ENCODE measurements at regions of chr11 and their contacts with region 1.

Region 1: GRCh38 chr11:30960387-30960992 is 374.3 kb upstream of the MPPED2 start:
- DNase-seq: peak; percentile 35
- ATAC-seq: peak; percentile 75
- H3K4me3 ChIP-seq: no peak overlapping the region
- H3K27ac ChIP-seq: no peak overlapping the region
- H3K4me1 ChIP-seq: no peaks in the 10 kb centered on the region
- H3K27me3 ChIP-seq: peaks cover 9% of the 10 kb centered on the region
- CTCF ChIP-seq: peak; percentile 54 to 66 (median 60)
- POLR2A ChIP-seq: no peak
- RAD21 ChIP-seq: peak; percentile 68

Region 2: DNA sequence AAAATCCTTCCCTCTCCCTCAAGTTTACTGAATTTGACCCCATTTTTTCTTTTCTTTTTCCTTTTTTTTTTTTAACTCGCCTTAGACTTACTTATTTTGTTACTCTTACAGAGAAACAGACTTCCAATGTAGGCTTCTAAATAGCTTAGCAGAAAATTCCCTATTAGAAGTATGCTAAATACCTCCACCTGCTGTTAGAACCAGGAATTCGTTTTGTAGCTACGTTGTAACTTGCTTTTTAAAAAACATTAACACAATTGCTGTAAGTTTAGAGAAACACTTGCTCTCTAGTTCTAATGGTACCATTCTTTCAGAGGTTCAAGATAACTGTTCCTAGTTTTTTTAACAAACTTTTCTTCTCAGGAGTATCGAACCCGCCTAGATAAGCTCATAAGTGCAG is 84.8 kb after region 1 on chr11:
- CTCF ChIA-PET with region 1: interaction called, 54 read pairs
- POLR2A ChIA-PET with region 1: no interaction called
- RAD21 ChIA-PET with region 1: interaction called, 6 to 7 read pairs
- intact Hi-C with region 1: loop called (anchors 1 kb)
- DNase-seq: peak; percentile 10
- ATAC-seq: no peak
- H3K4me3 ChIP-seq: no peak overlapping the region
- H3K27ac ChIP-seq: no peak overlapping the region
- H3K4me1 ChIP-seq: no peaks in the 10 kb centered on the region
- H3K27me3 ChIP-seq: no peaks in the 10 kb centered on the region; the same call in 1 of the 2 replicates
- CTCF ChIP-seq: peak; percentile 20 to 58 (median 32); a peak in 4 of 6 replicates
- POLR2A ChIP-seq: no peak
- RAD21 ChIP-seq: no peak

Region 3: GRCh38 chr11:31233424-31233823 is 272.9 kb after region 1 on chr11:
- CTCF ChIA-PET with region 1: interaction called, 16 read pairs
- POLR2A ChIA-PET with region 1: no interaction called
- RAD21 ChIA-PET with region 1: no interaction called
- intact Hi-C with region 1: loop called (anchors 2 kb)
- DNase-seq: peak; percentile 29
- ATAC-seq: peak; percentile 87
- H3K4me3 ChIP-seq: no peak overlapping the region
- H3K27ac ChIP-seq: no peak overlapping the region
- H3K4me1 ChIP-seq: no peaks in the 10 kb centered on the region
- H3K27me3 ChIP-seq: no peaks in the 10 kb centered on the region
- CTCF ChIP-seq: peak; percentile 40 to 60 (median 53); a peak in 5 of 6 replicates
- POLR2A ChIP-seq: no peak
- RAD21 ChIP-seq: peak; percentile 40

Region 4: GRCh38 chr11:31240338-31240904 is 279.9 kb after region 1 on chr11:
- CTCF ChIA-PET with region 1: no interaction called
- POLR2A ChIA-PET with region 1: no interaction called
- RAD21 ChIA-PET with region 1: no interaction called
- intact Hi-C with region 1: loop called (anchors 2 kb)
- DNase-seq: peak; percentile 59
- ATAC-seq: peak; percentile 80
- H3K4me3 ChIP-seq: no peak overlapping the region
- H3K27ac ChIP-seq: no peak overlapping the region
- H3K4me1 ChIP-seq: no peaks in the 10 kb centered on the region
- H3K27me3 ChIP-seq: no peaks in the 10 kb centered on the region
- CTCF ChIP-seq: peak; percentile 48 to 72 (median 62); a peak in 5 of 6 replicates
- POLR2A ChIP-seq: no peak
- RAD21 ChIP-seq: peak; percentile 72

Measured in HCT116 (cell line).